OCI-LY7 (cell line): ENCODE measurements at regions of chr16 and their contacts with region 1.

Region 1: GRCh38 chr16:30024451-30024850 is 1.5 kb downstream of the C16orf92 start:
- DNase-seq: no peak
- H3K4me3 ChIP-seq: no peak overlapping the region
- H3K27ac ChIP-seq: no peak overlapping the region
- H3K4me1 ChIP-seq: no peaks in the 10 kb centered on the region
- CTCF ChIP-seq: no peak

Region 2: GRCh38 chr16:29862884-29863668 is 161.4 kb before region 1 on chr16 and contains the start of gene CDIPT:
- CTCF ChIA-PET with region 1: no interaction called
- POLR2A ChIA-PET with region 1: no interaction called
- intact Hi-C with region 1: loop called (anchors 5 kb)
- DNase-seq: peak; percentile 99
- H3K4me3 ChIP-seq: peak within 1 kb of the TSS; percentile 91
- H3K27ac ChIP-seq: peak within 1 kb of the TSS; percentile 45
- H3K4me1 ChIP-seq: peaks cover 15% of the 10 kb centered on the region
- CTCF ChIP-seq: peak; percentile 78
- total RNA-seq, gene CDIPT: 39.6 and 52.4 TPM in 2 replicates

Region 3: DNA sequence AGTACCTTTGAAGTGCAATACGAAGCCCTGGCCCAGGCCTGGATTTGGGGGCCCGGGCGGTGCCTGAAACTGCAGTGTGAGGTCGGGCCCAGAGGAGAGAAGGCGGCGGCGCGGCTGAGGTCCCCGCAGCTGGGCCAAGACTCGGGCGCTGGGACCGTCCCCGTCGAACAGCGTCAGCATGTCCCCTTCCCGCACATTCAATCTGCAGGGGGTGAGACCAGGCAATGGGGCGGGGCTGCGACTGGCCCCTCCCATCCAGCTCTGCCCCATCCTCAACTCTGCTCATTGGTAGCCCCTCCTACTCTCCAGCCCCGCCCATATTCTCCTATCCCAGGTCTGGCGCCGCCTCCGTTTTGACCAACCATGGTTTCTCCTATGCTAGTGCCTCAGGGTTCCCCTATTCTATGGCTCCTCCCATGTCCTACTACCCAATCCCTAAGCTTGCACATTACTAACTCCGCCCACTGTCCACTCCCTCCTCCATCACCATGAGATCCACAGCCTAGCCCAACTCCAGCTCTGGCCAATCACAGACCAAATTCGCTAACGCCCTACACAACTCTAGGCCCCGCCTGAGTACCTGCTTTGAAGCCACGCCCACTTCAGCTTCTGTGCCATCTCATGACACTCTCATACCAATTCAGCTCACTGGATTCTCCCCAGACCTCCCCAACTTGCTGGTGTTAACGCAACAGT is 147.0 kb before region 1 on chr16:
- CTCF ChIA-PET with region 1: no interaction called
- POLR2A ChIA-PET with region 1: no interaction called
- intact Hi-C with region 1: loop called (anchors 5 kb)
- DNase-seq: peak; percentile 95
- H3K4me3 ChIP-seq: peak overlapping the region; percentile 20
- H3K27ac ChIP-seq: no peak overlapping the region
- H3K4me1 ChIP-seq: peaks cover 15% of the 10 kb centered on the region
- CTCF ChIP-seq: no peak

Region 4: GRCh38 chr16:29982560-29983419 is 41.7 kb before region 1 on chr16:
- CTCF ChIA-PET with region 1: no interaction called
- POLR2A ChIA-PET with region 1: no interaction called
- intact Hi-C with region 1: no loop called
- DNase-seq: no peak
- H3K4me3 ChIP-seq: no peak overlapping the region
- H3K27ac ChIP-seq: no peak overlapping the region
- H3K4me1 ChIP-seq: no peaks in the 10 kb centered on the region
- CTCF ChIP-seq: no peak

Region 5: DNA sequence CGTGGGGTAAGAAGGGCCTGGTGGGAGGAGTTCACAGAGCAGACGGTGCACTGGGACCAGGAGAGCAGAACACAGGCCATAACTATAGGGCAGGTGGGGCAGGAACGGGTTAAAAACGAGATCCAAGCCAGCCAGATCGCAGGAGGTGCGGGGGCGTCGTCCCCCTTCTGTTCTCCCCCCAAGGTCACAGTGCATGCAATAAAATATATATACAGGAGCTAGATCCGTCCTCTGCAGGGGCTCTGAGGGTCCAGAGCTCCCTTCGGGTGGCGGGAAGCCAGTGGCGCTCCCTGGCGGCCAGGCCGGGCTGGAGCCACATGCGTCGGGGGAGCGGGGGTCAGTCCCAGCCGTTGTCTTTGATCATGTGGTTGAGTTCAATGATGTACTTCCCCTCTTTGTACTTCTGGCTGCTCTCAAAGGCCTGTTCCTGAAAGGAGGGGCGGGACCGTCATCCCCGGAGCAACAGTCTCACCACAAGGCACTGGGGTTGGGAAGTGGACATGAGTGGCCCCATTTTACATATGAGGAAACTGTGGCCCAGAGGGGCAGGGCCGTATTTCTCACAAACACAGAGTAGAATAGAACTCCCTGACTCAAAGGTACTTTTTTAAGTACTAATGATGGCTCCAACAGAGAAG is 68.0 kb after region 1 on chr16:
- CTCF ChIA-PET with region 1: no interaction called
- POLR2A ChIA-PET with region 1: no interaction called
- intact Hi-C with region 1: no loop called
- DNase-seq: peak; percentile 95
- H3K4me3 ChIP-seq: peak overlapping the region; percentile 71
- H3K27ac ChIP-seq: peak overlapping the region; percentile 79
- H3K4me1 ChIP-seq: peaks cover 35% of the 10 kb centered on the region
- CTCF ChIP-seq: peak; percentile 88